ENCODE measurements at regions of chr6 and their contacts with region 1.

Region 1: DNA sequence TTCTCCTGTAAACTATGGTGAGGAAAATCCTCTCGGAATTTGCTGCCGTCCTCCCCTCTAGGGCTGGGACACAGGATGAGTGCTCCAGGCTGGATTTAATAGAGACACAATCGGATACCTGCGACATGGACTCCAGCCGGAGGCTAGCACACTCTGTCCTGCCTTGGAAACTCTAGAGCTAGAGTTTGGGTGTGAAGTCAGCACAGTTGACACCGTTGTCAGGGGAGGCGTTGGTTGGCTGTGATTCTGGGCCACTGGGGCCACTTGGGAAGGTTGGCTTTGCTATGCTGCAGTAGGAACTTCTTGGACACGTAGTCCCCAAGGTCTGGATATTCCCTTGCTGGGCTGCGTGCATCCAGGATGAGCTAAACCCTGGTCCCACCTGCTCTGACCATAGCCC is 169.4 kb downstream of the NRN1 start:
- DNase-seq: no peak
- H3K4me3 ChIP-seq: no peak overlapping the region
- H3K27ac ChIP-seq: no peak overlapping the region
- H3K4me1 ChIP-seq: no peaks in the 10 kb centered on the region
- H3K27me3 ChIP-seq: peaks cover 3% of the 10 kb centered on the region
- CTCF ChIP-seq: no peak

Region 2: GRCh38 chr6:5723841-5724691 is 113.3 kb before region 1 on chr6:
- CTCF ChIA-PET with region 1: no interaction called
- POLR2A ChIA-PET with region 1: no interaction called
- intact Hi-C with region 1: no loop called
- DNase-seq: peak; percentile 63
- H3K4me3 ChIP-seq: peak overlapping the region; percentile 21
- H3K27ac ChIP-seq: peak overlapping the region; percentile 76
- H3K4me1 ChIP-seq: peaks cover 26% of the 10 kb centered on the region
- H3K27me3 ChIP-seq: no peaks in the 10 kb centered on the region
- CTCF ChIP-seq: no peak

Region 3: DNA sequence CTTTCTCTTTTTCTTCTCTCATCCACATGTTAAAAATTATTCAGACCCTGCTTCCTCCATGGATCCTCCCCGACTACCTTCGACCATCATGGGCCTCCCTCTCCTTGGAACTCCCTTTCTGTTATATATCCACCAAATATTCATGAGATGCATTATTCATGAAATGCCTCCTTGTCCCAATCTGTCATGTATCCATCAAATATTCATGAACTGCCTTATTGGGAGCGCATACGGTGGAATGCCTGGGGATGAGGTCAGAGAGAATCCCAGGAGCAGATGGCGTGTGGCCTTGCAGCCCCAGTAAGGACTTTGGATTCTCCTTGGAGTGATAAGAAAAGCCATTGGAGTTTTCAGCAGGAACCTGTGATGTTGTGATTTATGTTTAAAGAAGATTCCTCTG is 72.4 kb after region 1 on chr6:
- CTCF ChIA-PET with region 1: no interaction called
- POLR2A ChIA-PET with region 1: no interaction called
- intact Hi-C with region 1: no loop called
- DNase-seq: peak; percentile 22
- H3K4me3 ChIP-seq: no peak overlapping the region
- H3K27ac ChIP-seq: no peak overlapping the region
- H3K4me1 ChIP-seq: peaks cover 7% of the 10 kb centered on the region
- H3K27me3 ChIP-seq: no peaks in the 10 kb centered on the region
- CTCF ChIP-seq: no peak

Region 4: GRCh38 chr6:5981126-5982026 is 144.1 kb after region 1 on chr6:
- CTCF ChIA-PET with region 1: no interaction called
- POLR2A ChIA-PET with region 1: interaction called, 16 read pairs
- intact Hi-C with region 1: no loop called
- DNase-seq: peak; percentile 79
- H3K4me3 ChIP-seq: no peak overlapping the region
- H3K27ac ChIP-seq: no peak overlapping the region
- H3K4me1 ChIP-seq: peaks cover 11% of the 10 kb centered on the region
- H3K27me3 ChIP-seq: no peaks in the 10 kb centered on the region
- CTCF ChIP-seq: no peak

Measured in A673 (cell line).